K562 (cell line): ENCODE measurements at regions of chr9 and their contacts with region 1.

Region 1: DNA sequence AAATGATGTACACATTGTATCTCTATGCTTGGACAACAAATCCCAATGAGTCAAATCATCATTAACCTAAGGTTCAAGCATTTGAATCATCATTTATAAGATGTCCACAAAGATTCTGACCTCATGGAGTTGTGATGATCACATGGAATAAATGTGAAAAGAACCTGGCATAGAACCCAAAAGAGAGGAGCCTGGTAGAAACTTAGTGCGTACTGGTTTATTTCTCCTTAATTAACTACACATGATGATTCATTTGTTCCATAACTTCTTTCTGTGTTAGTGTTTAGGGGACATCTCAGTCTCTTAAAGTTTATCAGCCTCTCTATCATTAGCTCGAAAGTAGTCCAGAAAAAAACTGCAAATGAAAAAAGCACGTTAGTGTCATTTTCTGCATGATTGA is 411.6 kb downstream of the BRINP1 start:
- DNase-seq: no peak
- ATAC-seq: no peak
- H3K4me3 ChIP-seq: no peak overlapping the region
- H3K27ac ChIP-seq: no peak overlapping the region
- H3K4me1 ChIP-seq: no peaks in the 10 kb centered on the region
- H3K27me3 ChIP-seq: no peaks in the 10 kb centered on the region
- CTCF ChIP-seq: no peak
- EP300 ChIP-seq: no peak
- POLR2A ChIP-seq: no peak
- RAD21 ChIP-seq: no peak

Region 2: GRCh38 chr9:119009249-119009648 is 51.7 kb after region 1 on chr9:
- CTCF ChIA-PET with region 1: no interaction called
- POLR2A ChIA-PET with region 1: no interaction called
- in situ Hi-C with region 1: no loop called
- intact Hi-C with region 1: loop called (anchors 10 kb)
- DNase-seq: no peak
- ATAC-seq: no peak
- H3K4me3 ChIP-seq: no peak overlapping the region
- H3K27ac ChIP-seq: no peak overlapping the region
- H3K4me1 ChIP-seq: no peaks in the 10 kb centered on the region
- H3K27me3 ChIP-seq: no peaks in the 10 kb centered on the region
- CTCF ChIP-seq: no peak
- EP300 ChIP-seq: no peak
- POLR2A ChIP-seq: no peak
- RAD21 ChIP-seq: no peak